ENCODE measurements at regions of chr11 and their contacts with region 1.

Region 1: DNA sequence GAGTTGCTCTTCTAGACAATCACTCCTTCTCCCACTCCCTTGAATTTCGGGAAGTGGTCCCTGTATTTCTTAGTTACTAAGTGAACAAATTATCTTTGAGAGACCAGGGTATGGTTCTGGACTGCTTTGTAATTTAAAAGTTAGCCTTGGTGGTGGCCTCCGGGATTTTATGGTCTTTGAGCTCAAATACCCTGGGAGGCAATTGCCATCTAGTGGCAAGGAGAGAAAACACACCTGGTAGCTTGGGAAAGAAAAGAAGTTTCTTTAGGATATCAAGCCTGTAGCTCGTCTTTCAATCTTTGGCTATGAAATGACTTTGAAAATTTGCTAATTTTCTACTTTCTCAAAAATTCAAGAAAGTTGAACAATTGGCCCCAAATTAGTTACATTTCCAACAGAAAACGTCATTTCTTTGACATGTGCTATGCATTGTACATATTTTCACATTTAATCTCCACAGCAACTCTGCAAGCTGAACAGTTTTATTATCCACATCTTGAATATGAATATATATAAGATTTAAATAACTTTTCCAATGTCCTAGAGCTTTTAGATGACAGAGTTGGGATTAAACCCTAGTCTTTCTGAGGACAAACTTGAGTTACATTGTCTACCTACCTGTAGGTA is 39.1 kb downstream of the MMP27 start:
- DNase-seq: peak; percentile 71
- H3K4me3 Mint-ChIP-seq: no peak overlapping the region
- H3K27ac Mint-ChIP-seq: no peak overlapping the region
- H3K4me1 Mint-ChIP-seq: no peaks in the 10 kb centered on the region
- H3K27me3 Mint-ChIP-seq: peaks cover 12% of the 10 kb centered on the region

Region 2: DNA sequence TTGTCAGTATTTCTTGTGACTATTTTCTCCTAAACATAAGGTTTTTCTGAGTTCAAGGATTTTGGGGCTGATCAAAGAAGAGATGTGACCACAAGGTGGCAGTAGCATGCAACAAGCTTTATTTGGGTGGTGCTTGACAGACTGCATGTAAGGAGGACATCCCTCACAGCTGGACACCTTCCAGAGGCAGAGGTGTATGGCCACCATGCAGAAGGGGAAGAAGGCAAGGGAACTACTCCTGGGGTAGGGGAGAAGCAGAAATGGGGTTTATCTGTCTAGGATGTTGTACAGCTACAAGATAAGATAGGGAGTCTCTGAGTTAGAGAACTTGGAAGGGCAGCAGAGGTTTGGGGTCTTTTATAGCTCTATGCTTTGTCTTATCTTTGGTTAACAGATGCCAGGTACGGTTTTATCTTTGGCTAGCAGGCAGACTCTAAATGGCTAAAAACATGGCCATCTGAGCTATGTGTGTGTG is 324.6 kb before region 1 on chr11:
- intact Hi-C with region 1: loop called (anchors 1 kb)
- DNase-seq: peak; percentile 92
- H3K4me3 Mint-ChIP-seq: no peak overlapping the region
- H3K27ac Mint-ChIP-seq: no peak overlapping the region
- H3K4me1 Mint-ChIP-seq: peaks cover 28% of the 10 kb centered on the region
- H3K27me3 Mint-ChIP-seq: no peaks in the 10 kb centered on the region

Region 3: GRCh38 chr11:102367364-102367763 is 299.1 kb before region 1 on chr11:
- intact Hi-C with region 1: loop called (anchors 5 kb)
- DNase-seq: no peak
- H3K4me3 Mint-ChIP-seq: no peak overlapping the region
- H3K27ac Mint-ChIP-seq: peak overlapping the region; percentile 7
- H3K4me1 Mint-ChIP-seq: peaks cover 26% of the 10 kb centered on the region
- H3K27me3 Mint-ChIP-seq: no peaks in the 10 kb centered on the region

Region 4: DNA sequence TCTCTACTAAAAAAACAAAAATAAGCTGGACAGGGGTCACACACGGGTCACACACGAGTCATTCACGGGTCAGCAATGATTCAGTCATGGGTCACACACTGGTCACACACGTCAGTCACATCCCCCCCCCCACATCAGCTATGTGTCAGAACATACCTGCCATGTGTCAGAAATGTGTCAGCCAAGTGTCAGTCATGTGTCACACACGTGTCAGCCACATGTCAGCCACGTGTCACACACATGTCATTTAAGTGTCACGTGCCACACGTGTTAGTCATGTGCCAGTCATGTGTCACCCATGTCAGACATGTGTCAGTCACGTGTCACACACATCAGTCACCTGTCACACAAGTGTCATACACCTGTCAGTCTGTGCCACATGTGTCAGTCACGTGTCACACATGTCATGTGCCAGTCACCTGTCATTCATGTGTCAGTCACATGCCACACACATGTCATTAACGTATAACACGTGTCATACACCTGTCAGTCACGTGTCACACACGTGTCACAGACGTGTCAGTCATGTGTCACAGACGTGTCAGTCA is 12.6 kb before region 1 on chr11:
- intact Hi-C with region 1: no loop called
- DNase-seq: no peak
- H3K4me3 Mint-ChIP-seq: no peak overlapping the region
- H3K27ac Mint-ChIP-seq: no peak overlapping the region
- H3K4me1 Mint-ChIP-seq: no peaks in the 10 kb centered on the region
- H3K27me3 Mint-ChIP-seq: peaks cover 22% of the 10 kb centered on the region